Ovary (tissue), 10 donors: ENCODE measurements at regions of chr1 and their contacts with region 1.

Region 1: GRCh38 chr1:108746372-108747205 is at the start of gene STXBP3:
- DNase-seq: peak; percentile 99 to 100 (median 100)
- H3K4me3 ChIP-seq: peak within 1 kb of the TSS; percentile 72
- H3K27ac ChIP-seq: peak within 1 kb of the TSS; percentile 84 to 86
- H3K4me1 ChIP-seq: peaks cover 5% of the 10 kb centered on the region
- H3K27me3 ChIP-seq: no peaks in the 10 kb centered on the region
- CTCF ChIP-seq: peak; percentile 94 to 95 (median 95)
- EP300 ChIP-seq: peak; percentile 65
- POLR2A ChIP-seq: peak; percentile 96
- total RNA-seq, gene STXBP3: 35.9 to 53.5 (median 44.7) TPM

Region 2: DNA sequence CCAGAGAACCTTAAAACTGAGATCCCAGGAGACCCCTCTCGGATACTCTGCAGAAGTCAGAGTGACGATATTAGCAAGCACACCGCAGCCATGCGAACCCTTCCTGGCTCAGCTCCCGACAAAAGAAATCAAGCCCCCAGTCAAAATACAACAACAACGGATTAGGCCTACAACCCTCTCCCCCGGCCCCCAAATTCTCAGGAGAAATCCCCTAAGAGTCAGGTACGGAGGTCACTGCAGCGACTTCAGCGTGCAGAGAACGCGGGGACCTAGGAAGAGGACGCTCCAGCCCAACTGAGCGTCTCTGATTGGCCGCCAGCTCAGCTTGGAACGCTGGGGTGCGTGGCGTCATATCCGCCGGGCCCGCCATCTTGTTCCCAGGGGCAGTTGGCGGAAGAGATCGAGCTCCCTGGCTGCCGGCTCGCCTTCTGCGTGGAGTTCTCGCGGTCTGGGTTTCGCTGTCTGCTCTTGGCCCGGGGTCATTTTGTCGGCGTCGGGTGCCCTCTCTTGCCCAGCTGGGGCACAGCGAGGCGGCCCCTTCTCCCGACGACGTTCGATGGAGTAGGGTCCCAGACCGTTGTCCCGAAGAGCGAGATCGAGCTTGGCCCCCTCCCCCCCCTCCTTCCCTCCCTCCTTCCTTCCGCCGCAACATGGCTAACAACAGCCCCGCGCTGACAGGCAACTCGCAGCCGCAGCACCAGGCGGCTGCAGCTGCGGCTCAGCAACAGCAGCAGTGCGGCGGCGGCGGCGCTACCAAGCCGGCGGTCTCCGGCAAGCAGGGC is 54.5 kb before region 1 on chr1 and contains the start of gene PRPF38B:
- intact Hi-C with region 1: loop called in 2 of 4 experiments (anchors 5 to 10 kb)
- DNase-seq: peak; percentile 90 to 96 (median 94)
- H3K4me3 ChIP-seq: peak within 1 kb of the TSS; percentile 89
- H3K27ac ChIP-seq: peak within 1 kb of the TSS; percentile 63 to 97
- H3K4me1 ChIP-seq: peaks cover 2% of the 10 kb centered on the region
- H3K27me3 ChIP-seq: no peaks in the 10 kb centered on the region
- CTCF ChIP-seq: no peak
- EP300 ChIP-seq: no peak
- POLR2A ChIP-seq: peak; percentile 95
- total RNA-seq, gene PRPF38B: 16.5 to 32.0 (median 29.4) TPM

Region 3: DNA sequence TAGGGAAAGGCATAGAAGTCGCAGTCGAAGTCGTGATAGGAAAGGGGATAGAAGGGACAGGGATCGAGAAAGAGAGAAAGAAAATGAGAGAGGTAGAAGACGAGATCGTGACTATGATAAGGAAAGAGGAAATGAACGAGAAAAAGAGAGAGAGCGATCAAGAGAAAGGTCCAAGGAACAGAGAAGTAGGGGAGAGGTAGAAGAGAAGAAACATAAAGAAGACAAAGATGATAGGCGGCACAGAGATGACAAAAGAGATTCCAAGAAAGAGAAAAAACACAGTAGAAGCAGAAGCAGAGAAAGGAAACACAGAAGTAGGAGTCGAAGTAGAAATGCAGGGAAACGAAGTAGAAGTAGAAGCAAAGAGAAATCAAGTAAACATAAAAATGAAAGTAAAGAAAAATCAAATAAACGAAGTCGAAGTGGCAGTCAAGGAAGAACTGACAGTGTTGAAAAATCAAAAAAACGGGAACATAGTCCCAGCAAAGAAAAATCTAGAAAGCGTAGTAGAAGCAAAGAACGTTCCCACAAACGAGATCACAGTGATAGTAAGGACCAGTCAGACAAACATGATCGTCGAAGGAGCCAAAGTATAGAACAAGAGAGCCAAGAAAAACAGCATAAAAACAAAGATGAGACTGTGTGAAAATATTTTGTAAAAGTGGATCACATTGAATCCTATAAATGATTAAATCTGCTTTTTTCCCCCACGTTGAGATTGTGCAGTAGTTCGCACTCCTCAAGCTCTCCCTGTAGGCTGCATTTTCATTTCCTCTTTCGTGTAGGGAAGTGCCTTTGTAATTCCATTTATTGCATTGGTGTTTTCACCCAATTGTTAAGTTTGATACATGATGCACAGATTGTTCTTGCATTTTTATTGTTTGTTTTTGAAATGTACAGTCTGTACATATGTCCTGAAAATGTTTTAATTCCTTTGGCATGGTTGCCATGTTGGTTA is 46.9 kb before region 1 on chr1:
- intact Hi-C with region 1: loop called in 2 of 4 experiments (anchors 5 to 10 kb)
- DNase-seq: no peak
- H3K4me3 ChIP-seq: no peak overlapping the region
- H3K27ac ChIP-seq: no peak overlapping the region
- H3K4me1 ChIP-seq: no peaks in the 10 kb centered on the region
- H3K27me3 ChIP-seq: no peaks in the 10 kb centered on the region
- CTCF ChIP-seq: no peak
- EP300 ChIP-seq: no peak
- POLR2A ChIP-seq: no peak

Region 4: DNA sequence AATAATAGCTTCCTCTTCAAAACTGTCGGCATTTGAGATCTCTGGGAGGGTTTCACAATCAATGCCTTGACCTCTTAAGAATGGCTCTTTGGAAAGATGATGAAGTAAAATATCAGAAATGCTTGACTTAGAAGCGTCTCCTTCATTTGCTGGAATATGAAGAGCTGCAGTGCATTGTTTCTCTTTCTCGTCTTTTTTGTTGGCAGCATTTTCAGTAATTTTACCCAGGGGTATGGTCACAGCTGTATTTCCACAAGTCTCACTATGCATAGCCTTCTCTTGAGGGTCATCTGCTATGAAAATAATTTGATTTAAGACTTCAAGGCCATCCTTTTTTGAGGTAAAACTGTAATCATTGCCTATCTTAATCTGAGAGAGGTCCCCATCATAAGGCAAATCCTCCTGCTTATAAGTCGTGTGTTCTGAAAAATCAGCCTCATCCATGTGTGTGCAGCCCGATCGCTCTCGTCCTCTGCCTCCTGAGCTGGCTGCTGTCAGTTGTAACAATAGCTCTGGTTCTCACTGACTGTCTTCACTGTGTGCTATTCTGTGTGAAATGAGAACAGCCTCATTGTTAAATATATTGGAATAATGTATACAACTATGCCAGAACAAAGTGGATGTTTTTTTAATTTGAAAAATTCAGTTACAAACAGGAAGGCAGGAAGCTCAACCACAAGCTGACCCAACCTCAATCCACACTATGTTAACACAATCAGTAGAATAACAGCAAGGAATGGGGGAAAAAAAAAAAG is 105.8 kb after region 1 on chr1:
- intact Hi-C with region 1: no loop called
- DNase-seq: no peak
- H3K4me3 ChIP-seq: no peak overlapping the region
- H3K27ac ChIP-seq: peak overlapping the region in 1 of 2 donors; percentile 13
- H3K4me1 ChIP-seq: peaks cover 7% of the 10 kb centered on the region
- H3K27me3 ChIP-seq: no peaks in the 10 kb centered on the region
- CTCF ChIP-seq: no peak
- EP300 ChIP-seq: no peak
- POLR2A ChIP-seq: no peak